Prostate gland (tissue), 2 donors: ENCODE measurements at regions of chr15 and their contacts with region 1.

Region 1: DNA sequence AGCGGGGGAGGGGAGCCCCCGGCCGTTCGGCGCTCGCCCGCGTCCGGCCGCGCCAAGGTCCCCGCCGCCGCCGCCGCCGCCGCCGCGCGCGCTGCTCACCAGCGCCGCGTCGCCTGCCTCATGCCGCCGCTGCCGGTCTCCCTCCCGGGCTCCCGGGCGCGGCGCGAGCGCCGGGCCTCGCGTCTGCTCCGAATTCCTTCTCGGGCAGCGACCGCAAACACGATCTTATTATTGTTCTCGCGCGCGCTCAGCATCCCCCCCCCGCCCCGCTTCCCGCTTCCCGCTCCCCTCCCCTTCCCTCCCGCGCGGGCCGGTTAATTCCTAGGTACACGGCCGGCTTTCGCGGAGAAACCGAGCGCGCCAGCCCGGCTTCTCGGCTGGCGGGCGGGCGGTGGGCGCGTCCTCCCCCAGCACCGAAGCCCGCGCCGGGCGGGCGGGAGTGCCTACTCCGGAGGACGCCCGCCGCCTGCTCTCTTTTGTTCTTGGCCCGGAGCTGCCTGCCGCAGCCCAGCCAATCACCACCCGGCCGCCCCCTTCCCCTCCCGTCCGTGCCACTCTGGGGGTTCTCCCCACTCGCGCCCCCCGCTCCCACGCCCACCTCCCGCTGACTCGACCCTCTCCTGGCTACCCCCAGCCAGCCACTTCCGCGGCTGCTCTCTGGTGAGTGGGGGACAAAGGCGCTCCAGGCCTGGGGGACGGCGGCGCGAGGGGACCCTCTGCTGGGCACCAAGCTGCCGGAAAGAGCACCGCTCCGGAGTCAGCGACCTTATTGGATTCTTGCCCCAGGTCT is at the start of gene HDGFL3:
- DNase-seq: peak; percentile 44
- H3K4me3 ChIP-seq: peak within 1 kb of the TSS; percentile 81 to 91
- H3K27ac ChIP-seq: peak within 1 kb of the TSS; percentile 92 to 93
- H3K4me1 ChIP-seq: no peaks in the 10 kb centered on the region
- H3K27me3 ChIP-seq: no peaks in the 10 kb centered on the region
- CTCF ChIP-seq: no peak
- POLR2A ChIP-seq: peak; percentile 26
- total RNA-seq, gene HDGFL3: 19.4 to 55.4 TPM

Region 2: GRCh38 chr15:83011271-83012075 is 196.3 kb before region 1 on chr15 and contains the start of gene C15orf40:
- intact Hi-C with region 1: loop called (anchors 5 kb)
- DNase-seq: peak; percentile 88
- H3K4me3 ChIP-seq: peak within 1 kb of the TSS; percentile 85 to 98
- H3K27ac ChIP-seq: peak within 1 kb of the TSS; percentile 76 to 82
- H3K4me1 ChIP-seq: peaks cover 5% of the 10 kb centered on the region
- H3K27me3 ChIP-seq: no peaks in the 10 kb centered on the region
- CTCF ChIP-seq: peak; percentile 50 to 94 (median 84)
- POLR2A ChIP-seq: peak; percentile 65
- total RNA-seq, gene C15orf40: 15.4 to 22.1 TPM

Region 3: DNA sequence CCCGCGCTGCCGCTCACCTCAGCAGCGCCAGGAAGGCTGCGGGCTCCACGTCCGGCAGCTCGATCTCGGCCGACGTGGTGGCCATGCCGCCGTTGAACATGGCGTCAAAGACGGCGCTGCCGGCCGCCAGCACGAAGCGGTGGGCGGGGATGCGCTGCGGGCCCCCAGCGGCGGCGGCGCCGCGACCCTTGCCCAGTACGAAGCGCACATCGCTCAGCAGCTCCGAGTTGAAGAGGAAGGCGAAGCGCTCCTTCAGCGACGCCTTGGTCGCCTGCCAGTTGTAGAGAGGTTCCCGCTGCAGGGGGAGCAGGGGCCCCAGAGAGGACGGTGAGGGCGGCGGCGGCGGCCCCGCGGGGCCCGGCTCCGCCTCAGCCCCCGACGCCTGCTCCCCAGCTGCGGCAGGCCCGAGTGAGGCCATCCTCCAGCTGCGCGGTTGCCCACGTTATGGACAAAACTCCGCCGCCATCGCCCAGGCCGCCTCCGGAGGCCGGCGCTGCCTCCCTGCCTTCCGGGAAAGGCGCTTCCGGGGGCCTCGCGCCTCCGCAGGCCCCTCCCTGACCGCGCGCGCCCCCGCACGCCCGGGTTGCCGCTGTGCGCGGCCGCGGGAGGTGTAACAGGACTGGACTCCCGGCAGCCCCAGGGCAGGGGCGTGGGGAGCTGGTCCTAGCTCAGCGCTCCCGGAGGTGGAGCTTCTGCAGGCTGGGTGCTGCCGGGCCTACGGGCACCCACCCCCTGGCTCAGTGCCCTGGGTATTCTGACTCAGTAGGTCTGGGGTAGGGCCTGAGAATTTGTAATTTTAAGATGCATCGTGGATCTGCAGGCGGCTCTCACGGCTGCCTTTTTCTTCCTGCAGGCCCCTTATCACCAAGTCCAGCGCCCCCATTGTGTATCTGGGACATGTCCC is 140.8 kb before region 1 on chr15 and contains the start of gene BTBD1:
- intact Hi-C with region 1: loop called (anchors 1 kb)
- DNase-seq: peak; percentile 82
- H3K4me3 ChIP-seq: peak within 1 kb of the TSS; percentile 83 to 86
- H3K27ac ChIP-seq: peak within 1 kb of the TSS; percentile 88 to 94
- H3K4me1 ChIP-seq: no peaks in the 10 kb centered on the region
- H3K27me3 ChIP-seq: no peaks in the 10 kb centered on the region
- CTCF ChIP-seq: peak in 3 of 4 experiments; percentile 15 to 24 (median 23)
- POLR2A ChIP-seq: peak; percentile 94
- total RNA-seq, gene BTBD1: 56.6 to 71.3 TPM

Region 4: DNA sequence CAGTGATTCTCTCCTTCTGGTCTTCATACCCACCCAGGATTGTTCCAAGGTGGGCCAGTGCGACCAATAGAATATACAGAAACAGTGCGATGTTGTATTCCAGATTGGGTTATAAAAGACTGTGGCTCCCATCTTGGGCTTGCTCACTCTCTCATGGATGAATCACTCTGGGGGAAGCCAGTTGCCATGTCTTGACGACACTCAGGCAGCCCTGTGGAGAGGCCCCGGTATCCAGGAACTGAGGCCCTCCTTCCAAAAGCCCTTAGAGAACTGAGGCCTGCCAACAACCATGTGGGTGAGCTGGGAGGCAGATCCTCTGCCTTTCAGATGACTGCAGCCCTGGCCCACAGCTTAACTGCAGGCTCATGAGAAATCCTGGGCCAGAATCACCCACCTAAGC is 296.5 kb after region 1 on chr15:
- intact Hi-C with region 1: no loop called
- DNase-seq: no peak
- H3K4me3 ChIP-seq: no peak overlapping the region
- H3K27ac ChIP-seq: no peak overlapping the region
- H3K4me1 ChIP-seq: no peaks in the 10 kb centered on the region
- H3K27me3 ChIP-seq: no peaks in the 10 kb centered on the region
- CTCF ChIP-seq: no peak
- POLR2A ChIP-seq: no peak